Activated naive CD4-positive, alpha-beta T cell treated with anti-CD3 and anti-CD28 coated beads, Interleukin-2, amount 10 ng/mL, durations not matched to agents 7 days and 5 days (primary cell): ENCODE measurements at regions of chr5 and their contacts with region 1.

Region 1: GRCh38 chr5:170603578-170604565 is 100.1 kb downstream of the KCNIP1 start:
- DNase-seq: peak; percentile 67
- H3K4me3 Mint-ChIP-seq: no peak overlapping the region
- H3K27ac Mint-ChIP-seq: no peak overlapping the region
- H3K4me1 Mint-ChIP-seq: no peaks in the 10 kb centered on the region
- H3K27me3 Mint-ChIP-seq: peaks cover 43% of the 10 kb centered on the region

Region 2: DNA sequence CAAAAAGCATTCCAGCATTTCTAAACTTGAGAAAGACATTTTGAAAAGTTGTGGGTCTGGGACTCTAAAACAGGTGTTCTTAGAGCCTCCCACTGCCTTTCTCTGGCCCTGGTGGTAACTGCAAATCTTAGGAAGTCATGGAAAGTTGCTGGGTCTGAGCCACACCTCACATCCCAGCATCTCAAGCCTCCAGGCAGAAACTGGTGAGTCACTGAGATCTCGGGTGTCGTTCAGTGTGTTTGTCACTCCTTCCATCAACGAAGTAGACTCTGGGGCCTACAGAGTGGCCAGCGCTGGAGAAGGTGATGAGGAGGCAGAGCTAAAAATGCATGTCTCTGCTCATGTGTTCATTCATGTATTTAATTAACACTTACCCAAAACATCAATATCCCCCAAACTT is 430.6 kb before region 1 on chr5:
- CTCF ChIA-PET with region 1: no interaction called
- DNase-seq: no peak
- H3K4me3 Mint-ChIP-seq: no peak overlapping the region
- H3K27ac Mint-ChIP-seq: no peak overlapping the region
- H3K4me1 Mint-ChIP-seq: no peaks in the 10 kb centered on the region
- H3K27me3 Mint-ChIP-seq: peaks cover 23% of the 10 kb centered on the region

Region 3: GRCh38 chr5:170614720-170615119 is 10.8 kb after region 1 on chr5:
- CTCF ChIA-PET with region 1: interaction called, 15 read pairs
- DNase-seq: no peak
- H3K4me3 Mint-ChIP-seq: no peak overlapping the region
- H3K27ac Mint-ChIP-seq: no peak overlapping the region
- H3K4me1 Mint-ChIP-seq: peaks cover 6% of the 10 kb centered on the region
- H3K27me3 Mint-ChIP-seq: peaks cover 42% of the 10 kb centered on the region

Region 4: GRCh38 chr5:170648541-170648940 is 44.7 kb after region 1 on chr5:
- CTCF ChIA-PET with region 1: no interaction called
- DNase-seq: no peak
- H3K4me3 Mint-ChIP-seq: no peak overlapping the region
- H3K27ac Mint-ChIP-seq: no peak overlapping the region
- H3K4me1 Mint-ChIP-seq: no peaks in the 10 kb centered on the region
- H3K27me3 Mint-ChIP-seq: peaks cover 25% of the 10 kb centered on the region